A673 (cell line): ENCODE measurements at regions of chr19 and their contacts with region 1.

Region 1: DNA sequence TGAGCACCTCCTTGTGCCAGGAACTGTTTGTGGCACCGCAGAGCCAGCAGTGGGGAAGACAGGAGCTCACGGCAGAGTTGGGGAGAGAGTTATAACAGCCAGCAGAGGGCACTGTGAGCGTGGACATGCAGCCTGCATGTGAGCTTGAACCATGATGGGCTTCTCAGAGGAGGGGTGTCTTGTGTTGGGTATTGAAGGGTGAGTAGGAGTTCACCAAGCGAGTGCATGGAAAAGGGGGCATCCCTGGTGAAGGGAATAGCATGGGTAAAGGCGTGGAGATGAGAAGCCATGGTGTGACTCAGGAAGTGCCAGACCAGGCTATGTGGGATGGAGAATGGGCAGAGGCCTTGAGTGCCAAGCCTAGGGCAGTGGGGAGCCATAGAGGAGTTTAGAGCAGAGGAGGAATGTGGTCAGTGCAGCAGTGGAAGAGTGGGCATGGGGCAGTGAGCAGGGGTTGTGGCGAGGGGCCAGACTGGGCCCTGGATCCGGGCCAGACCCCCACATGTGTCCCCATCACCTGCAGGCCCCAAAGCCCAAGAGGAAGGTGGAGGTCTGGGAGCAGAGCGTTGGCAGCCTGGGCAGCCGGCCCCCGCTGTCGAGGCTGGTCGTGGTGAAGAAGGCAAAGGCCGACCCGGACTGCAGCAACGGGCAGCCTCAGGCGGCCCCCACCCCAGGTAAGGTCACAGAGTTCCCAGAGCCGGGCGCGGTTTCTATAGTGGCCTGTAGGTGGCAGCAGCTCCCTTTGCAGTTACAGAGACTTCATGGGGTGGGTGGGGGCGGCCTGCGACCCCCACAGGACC is 11.8 kb upstream of the SHD start:
- DNase-seq: peak; percentile 76
- H3K4me3 ChIP-seq: no peak overlapping the region
- H3K27ac ChIP-seq: no peak overlapping the region
- H3K4me1 ChIP-seq: no peaks in the 10 kb centered on the region
- H3K27me3 ChIP-seq: no peaks in the 10 kb centered on the region
- CTCF ChIP-seq: peak; percentile 80

Region 2: GRCh38 chr19:4352701-4353121 is 85.4 kb after region 1 on chr19:
- CTCF ChIA-PET with region 1: interaction called, 21 read pairs
- POLR2A ChIA-PET with region 1: no interaction called
- intact Hi-C with region 1: loop called (anchors 1 kb)
- DNase-seq: peak; percentile 76
- H3K4me3 ChIP-seq: no peak overlapping the region
- H3K27ac ChIP-seq: no peak overlapping the region
- H3K4me1 ChIP-seq: no peaks in the 10 kb centered on the region
- H3K27me3 ChIP-seq: no peaks in the 10 kb centered on the region
- CTCF ChIP-seq: peak; percentile 83

Region 3: DNA sequence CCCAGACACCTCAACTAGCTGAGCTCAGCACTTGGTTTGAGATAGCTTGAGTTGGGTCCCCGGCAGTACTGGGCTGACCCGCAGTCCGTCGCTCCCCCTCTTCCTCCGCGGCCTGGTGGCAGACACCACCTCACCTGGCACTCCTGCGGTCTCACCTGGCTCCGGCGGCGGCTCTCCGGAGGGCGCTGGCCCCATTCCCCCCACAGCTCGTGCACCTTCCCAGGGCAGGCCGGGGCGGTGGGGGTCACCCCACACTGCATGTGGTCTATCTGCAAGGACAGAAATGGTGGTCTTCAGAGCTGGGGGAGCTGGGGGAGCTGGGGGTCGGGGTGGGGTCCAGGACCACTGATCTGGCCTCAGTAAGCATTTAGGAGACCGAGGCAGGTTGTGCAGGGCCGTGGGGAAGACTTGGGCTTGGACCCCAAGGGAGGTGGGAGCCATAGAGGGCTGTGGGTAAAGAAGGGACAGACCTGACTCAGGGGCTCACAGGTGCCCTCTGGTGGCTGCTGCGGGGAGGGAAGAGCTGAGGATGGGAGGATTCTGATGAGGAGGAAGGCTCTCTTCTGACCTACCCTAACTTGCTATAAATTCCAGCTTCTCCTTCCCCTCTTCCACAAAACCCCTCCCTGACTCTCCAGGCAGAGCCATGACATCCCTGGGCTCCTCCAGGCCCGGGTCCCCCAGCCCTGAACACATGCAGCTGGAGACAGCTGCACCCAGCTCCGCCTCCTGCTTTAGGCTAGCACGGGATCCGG is 257.7 kb after region 1 on chr19:
- CTCF ChIA-PET with region 1: no interaction called
- POLR2A ChIA-PET with region 1: no interaction called
- intact Hi-C with region 1: loop called (anchors 5 kb)
- DNase-seq: peak; percentile 63
- H3K4me3 ChIP-seq: no peak overlapping the region
- H3K27ac ChIP-seq: no peak overlapping the region
- H3K4me1 ChIP-seq: no peaks in the 10 kb centered on the region
- H3K27me3 ChIP-seq: no peaks in the 10 kb centered on the region
- CTCF ChIP-seq: peak; percentile 76

Region 4: GRCh38 chr19:4567584-4568071 is 300.3 kb after region 1 on chr19:
- CTCF ChIA-PET with region 1: interaction called, 10 read pairs
- POLR2A ChIA-PET with region 1: no interaction called
- intact Hi-C with region 1: no loop called
- DNase-seq: peak; percentile 61
- H3K4me3 ChIP-seq: no peak overlapping the region
- H3K27ac ChIP-seq: no peak overlapping the region
- H3K4me1 ChIP-seq: no peaks in the 10 kb centered on the region
- H3K27me3 ChIP-seq: no peaks in the 10 kb centered on the region
- CTCF ChIP-seq: peak; percentile 88